ENCODE measurements at regions of chr2 and their contacts with region 1.

Region 1: DNA sequence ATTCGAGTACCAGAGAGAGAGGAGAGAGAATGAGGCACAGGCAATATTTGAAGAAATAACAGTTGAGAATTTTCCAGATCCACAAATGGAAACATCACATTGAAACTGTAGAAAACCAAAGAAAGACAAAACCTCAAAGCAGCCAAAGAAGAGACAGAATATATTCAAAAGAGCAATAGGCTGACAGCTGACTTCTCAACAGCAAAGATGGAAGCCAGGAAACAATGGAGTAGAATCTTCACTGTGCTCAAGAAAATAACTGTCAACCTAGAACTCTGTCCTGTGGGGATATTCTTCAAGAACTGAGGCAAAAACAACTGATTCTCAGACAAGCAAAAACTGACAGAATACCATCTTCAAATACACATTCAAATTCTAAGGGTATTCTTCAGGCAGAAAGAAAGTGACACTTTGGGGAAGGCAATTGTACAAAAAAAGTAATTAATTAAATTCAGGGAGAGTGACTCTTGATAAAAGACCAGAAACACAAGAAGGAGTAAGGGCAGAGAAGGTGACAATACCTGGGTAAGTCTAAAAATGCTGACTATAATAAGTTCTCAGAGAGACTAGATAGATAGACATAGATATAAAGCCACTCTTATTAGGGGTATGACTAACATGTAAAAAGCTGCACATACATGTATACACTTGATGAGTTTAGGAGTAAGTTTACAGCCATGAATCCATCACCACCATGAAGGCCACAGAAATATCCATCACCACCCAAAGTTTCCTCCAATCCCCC is 25.6 kb downstream of the ANKMY1 start:
- DNase-seq: no peak
- H3K4me3 ChIP-seq: no peak overlapping the region
- H3K27ac ChIP-seq: no peak overlapping the region
- H3K4me1 ChIP-seq: no peaks in the 10 kb centered on the region
- H3K27me3 ChIP-seq: no peaks in the 10 kb centered on the region
- CTCF ChIP-seq: no peak

Region 2: DNA sequence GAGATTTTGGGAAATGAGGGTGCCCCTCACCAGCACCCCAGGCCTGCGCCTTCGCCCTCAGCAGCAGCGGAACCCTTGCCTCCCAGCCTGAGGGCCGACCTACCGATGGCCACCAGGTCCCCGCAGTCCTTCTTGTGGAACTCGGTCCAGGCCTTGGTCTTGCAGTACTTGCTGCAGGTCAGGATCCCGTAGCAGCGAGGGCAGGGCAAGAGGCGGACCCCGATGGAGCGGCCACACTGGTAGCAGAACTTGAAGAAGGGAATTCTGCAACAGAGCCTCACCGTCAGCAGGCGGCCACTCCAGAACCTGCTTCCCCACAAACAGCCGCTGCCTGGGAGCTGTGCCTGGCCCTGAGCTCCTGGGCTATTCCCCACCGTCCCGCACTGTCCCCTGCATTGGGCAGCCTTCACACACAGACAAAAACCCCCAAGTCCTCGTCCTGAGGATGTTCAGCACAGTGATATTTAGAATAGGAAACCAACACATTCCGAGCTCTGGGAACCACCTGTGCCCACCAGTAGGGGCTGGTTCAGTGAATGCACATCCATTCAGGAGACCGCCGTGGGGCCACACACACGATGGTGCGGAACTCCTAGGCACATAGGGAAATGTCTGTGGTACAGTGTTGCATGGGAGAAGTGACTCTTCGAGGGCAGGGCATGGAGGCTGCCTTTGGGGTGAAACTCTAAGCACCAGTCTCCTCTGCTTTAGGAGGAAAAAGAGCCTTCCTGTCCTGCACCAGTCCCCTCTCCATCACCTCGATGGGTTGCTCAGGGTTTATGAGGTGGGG is 51.2 kb before region 1 on chr2:
- intact Hi-C with region 1: loop called (anchors 1 kb)
- DNase-seq: peak; percentile 10 to 51
- H3K4me3 ChIP-seq: no peak overlapping the region
- H3K27ac ChIP-seq: no peak overlapping the region
- H3K4me1 ChIP-seq: no peaks in the 10 kb centered on the region
- H3K27me3 ChIP-seq: no peaks in the 10 kb centered on the region
- CTCF ChIP-seq: no peak

Measured in tibial artery (tissue), 4 donors.